T-cell (primary cell): ENCODE measurements at regions of chr19 and their contacts with region 1.

Region 1: DNA sequence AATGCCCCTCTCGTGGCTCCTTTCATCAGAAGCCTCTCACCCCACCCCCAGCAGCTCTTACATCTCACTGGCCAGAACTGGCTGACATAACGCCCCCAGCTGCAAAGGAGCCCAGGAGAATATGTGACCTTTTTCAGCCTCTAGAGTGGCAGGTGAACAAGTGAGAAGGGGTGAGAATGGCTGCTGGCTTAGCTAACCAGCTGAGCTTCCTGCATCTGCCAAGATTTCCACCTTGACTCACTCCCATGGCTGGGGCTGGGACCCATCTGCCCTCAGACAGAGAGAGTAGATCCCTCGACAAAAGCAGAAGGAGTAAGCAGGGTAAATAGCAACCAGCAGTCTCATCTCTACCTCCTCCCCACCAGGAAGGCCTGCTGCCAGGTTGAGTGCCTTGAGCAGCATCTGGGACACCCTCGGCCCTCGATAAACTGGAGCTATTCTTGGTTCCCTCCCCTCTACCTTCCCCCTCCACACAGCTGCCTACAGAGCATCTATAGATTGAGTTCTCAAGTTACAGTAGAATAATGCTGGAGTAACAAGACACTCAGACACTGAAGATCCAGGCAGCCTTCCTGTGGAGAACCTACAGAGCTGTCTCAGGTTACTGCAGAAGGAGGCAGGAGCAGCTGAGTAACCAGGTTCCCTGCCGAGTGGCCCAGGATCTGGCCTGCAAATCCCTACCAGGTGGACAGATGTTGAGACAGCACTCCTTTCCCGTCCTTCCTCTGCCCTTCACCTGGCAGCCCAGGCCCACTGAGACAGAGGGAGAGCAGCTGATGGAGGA is 15.5 kb downstream of the KASH5 start:
- DNase-seq: no peak
- ATAC-seq: peak in 1 of 4 experiments; percentile 31
- H3K4me3 ChIP-seq: no peak overlapping the region
- H3K4me3 Mint-ChIP-seq: no peak overlapping the region
- H3K27ac ChIP-seq: no peak overlapping the region
- H3K27ac Mint-ChIP-seq: peak overlapping the region in 1 of 2 donors; percentile 27
- H3K4me1 ChIP-seq: peaks cover 20 to 37% of the 10 kb centered on the region in 2 experiments
- H3K4me1 Mint-ChIP-seq: peaks cover 27 to 40% (median 32%) of the 10 kb centered on the region in 3 donors
- H3K27me3 ChIP-seq: peaks cover 0 to 5% of the 10 kb centered on the region in 2 experiments
- H3K27me3 Mint-ChIP-seq: no peaks in the 10 kb centered on the region

Region 2: GRCh38 chr19:49244256-49244655 is 159.3 kb before region 1 on chr19:
- CTCF ChIA-PET with region 1: no interaction called
- POLR2A ChIA-PET with region 1: no interaction called
- DNase-seq: no peak
- ATAC-seq: no peak
- H3K4me3 ChIP-seq: no peak overlapping the region
- H3K4me3 Mint-ChIP-seq: no peak overlapping the region
- H3K27ac ChIP-seq: no peak overlapping the region
- H3K27ac Mint-ChIP-seq: no peak overlapping the region
- H3K4me1 ChIP-seq: no peaks in the 10 kb centered on the region
- H3K4me1 Mint-ChIP-seq: no peaks in the 10 kb centered on the region
- H3K27me3 ChIP-seq: peaks cover 0 to 13% of the 10 kb centered on the region in 2 experiments
- H3K27me3 Mint-ChIP-seq: peaks cover 0 to 9% of the 10 kb centered on the region in 2 donors

Region 3: DNA sequence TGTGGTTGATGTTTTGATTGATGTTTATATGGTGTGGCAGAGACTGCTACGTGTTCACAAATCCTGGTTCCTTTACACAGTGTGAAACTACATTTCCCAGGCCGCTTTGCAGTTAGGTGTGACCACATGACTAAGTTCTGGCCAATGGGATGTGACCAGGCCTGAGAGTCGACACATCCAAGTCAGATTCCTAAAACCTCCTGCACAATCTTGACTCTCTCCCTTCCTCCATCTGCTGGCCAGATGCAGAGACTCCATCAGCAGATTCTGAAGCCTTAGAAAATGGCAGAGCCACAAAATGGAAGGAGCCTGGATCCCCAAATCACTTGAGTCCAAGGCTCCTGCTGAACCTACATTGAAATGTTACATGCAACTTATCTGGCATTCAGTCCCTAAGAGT is 55.8 kb before region 1 on chr19:
- CTCF ChIA-PET with region 1: no interaction called
- POLR2A ChIA-PET with region 1: no interaction called
- DNase-seq: peak in 2 of 35 experiments; percentile 27 to 29
- ATAC-seq: peak in 1 of 4 experiments; percentile 55
- H3K4me3 ChIP-seq: no peak overlapping the region
- H3K4me3 Mint-ChIP-seq: no peak overlapping the region
- H3K27ac ChIP-seq: no peak overlapping the region
- H3K27ac Mint-ChIP-seq: no peak overlapping the region
- H3K4me1 ChIP-seq: peaks cover 0 to 5% of the 10 kb centered on the region in 2 experiments
- H3K4me1 Mint-ChIP-seq: peaks cover 7 to 11% (median 10%) of the 10 kb centered on the region in 3 donors
- H3K27me3 ChIP-seq: peaks cover 0 to 6% of the 10 kb centered on the region in 2 experiments
- H3K27me3 Mint-ChIP-seq: peaks cover 0 to 5% of the 10 kb centered on the region in 2 donors

Region 4: GRCh38 chr19:49391581-49392399 is 11.8 kb before region 1 on chr19:
- CTCF ChIA-PET with region 1: interaction called in 1 of 2 experiments, 10 read pairs
- POLR2A ChIA-PET with region 1: no interaction called
- DNase-seq: peak; percentile 56 to 88 (median 71)
- ATAC-seq: peak; percentile 75 to 84 (median 80)
- H3K4me3 ChIP-seq: no peak overlapping the region
- H3K4me3 Mint-ChIP-seq: no peak overlapping the region
- H3K27ac ChIP-seq: peak overlapping the region; percentile 50
- H3K27ac Mint-ChIP-seq: peak overlapping the region; percentile 41 to 59
- H3K4me1 ChIP-seq: peaks cover 2 to 23% of the 10 kb centered on the region in 2 experiments
- H3K4me1 Mint-ChIP-seq: peaks cover 16 to 24% (median 19%) of the 10 kb centered on the region in 3 donors
- H3K27me3 ChIP-seq: peaks cover 0 to 12% of the 10 kb centered on the region in 2 experiments
- H3K27me3 Mint-ChIP-seq: peaks cover 0 to 1% of the 10 kb centered on the region in 2 donors

Region 5: GRCh38 chr19:49443366-49444099 is 39.9 kb after region 1 on chr19:
- CTCF ChIA-PET with region 1: no interaction called
- POLR2A ChIA-PET with region 1: no interaction called
- DNase-seq: peak; percentile 83 to 97 (median 91)
- ATAC-seq: peak; percentile 87 to 94 (median 90)
- H3K4me3 ChIP-seq: peak overlapping the region; percentile 52 to 58
- H3K4me3 Mint-ChIP-seq: peak overlapping the region; percentile 76 to 83 (median 80)
- H3K27ac ChIP-seq: peak overlapping the region; percentile 55
- H3K27ac Mint-ChIP-seq: peak overlapping the region; percentile 66 to 88
- H3K4me1 ChIP-seq: peaks cover 2 to 54% of the 10 kb centered on the region in 2 experiments
- H3K4me1 Mint-ChIP-seq: peaks cover 31 to 42% (median 39%) of the 10 kb centered on the region in 3 donors
- H3K27me3 ChIP-seq: peaks cover 15 to 40% of the 10 kb centered on the region in 2 experiments
- H3K27me3 Mint-ChIP-seq: peaks cover 36 to 37% of the 10 kb centered on the region in 2 donors

Region 6: GRCh38 chr19:49453757-49454240 is 50.2 kb after region 1 on chr19:
- CTCF ChIA-PET with region 1: no interaction called
- POLR2A ChIA-PET with region 1: no interaction called
- DNase-seq: peak in 1 of 35 experiments; percentile 54
- ATAC-seq: no peak
- H3K4me3 ChIP-seq: peak overlapping the region; percentile 51 to 74
- H3K4me3 Mint-ChIP-seq: peak overlapping the region; percentile 95 to 98 (median 98)
- H3K27ac ChIP-seq: peak overlapping the region; percentile 83
- H3K27ac Mint-ChIP-seq: peak overlapping the region; percentile 98 to 99
- H3K4me1 ChIP-seq: peaks cover 7 to 65% of the 10 kb centered on the region in 2 experiments
- H3K4me1 Mint-ChIP-seq: peaks cover 45 to 62% (median 51%) of the 10 kb centered on the region in 3 donors
- H3K27me3 ChIP-seq: no peaks in the 10 kb centered on the region
- H3K27me3 Mint-ChIP-seq: no peaks in the 10 kb centered on the region